ENCODE measurements at regions of chr15 and their contacts with region 1.

Region 1: GRCh38 chr15:84669726-84670125 is 11.7 kb upstream of the NMB start:
- DNase-seq: no peak
- ATAC-seq: no peak
- H3K4me3 ChIP-seq: no peak overlapping the region
- H3K27ac ChIP-seq: no peak overlapping the region
- H3K4me1 ChIP-seq: no peaks in the 10 kb centered on the region
- H3K27me3 ChIP-seq: no peaks in the 10 kb centered on the region
- CTCF ChIP-seq: no peak

Region 2: GRCh38 chr15:84633311-84634227 is 36.2 kb before region 1 on chr15:
- intact Hi-C with region 1: no loop called
- DNase-seq: peak; percentile 71 to 85
- ATAC-seq: peak; percentile 64 to 70 (median 64)
- H3K4me3 ChIP-seq: peak overlapping the region; percentile 89
- H3K27ac ChIP-seq: peak overlapping the region; percentile 97
- H3K4me1 ChIP-seq: peaks cover 28% of the 10 kb centered on the region
- H3K27me3 ChIP-seq: no peaks in the 10 kb centered on the region
- CTCF ChIP-seq: no peak

Region 3: GRCh38 chr15:84702961-84703482 is 33.3 kb after region 1 on chr15:
- intact Hi-C with region 1: loop called (anchors 5 kb)
- DNase-seq: peak in 1 of 2 donors; percentile 26
- ATAC-seq: peak; percentile 61 to 82 (median 78)
- H3K4me3 ChIP-seq: no peak overlapping the region
- H3K27ac ChIP-seq: peak overlapping the region; percentile 62
- H3K4me1 ChIP-seq: peaks cover 22% of the 10 kb centered on the region
- H3K27me3 ChIP-seq: no peaks in the 10 kb centered on the region
- CTCF ChIP-seq: no peak